ENCODE measurements at regions of chr6 and their contacts with region 1.

Region 1: DNA sequence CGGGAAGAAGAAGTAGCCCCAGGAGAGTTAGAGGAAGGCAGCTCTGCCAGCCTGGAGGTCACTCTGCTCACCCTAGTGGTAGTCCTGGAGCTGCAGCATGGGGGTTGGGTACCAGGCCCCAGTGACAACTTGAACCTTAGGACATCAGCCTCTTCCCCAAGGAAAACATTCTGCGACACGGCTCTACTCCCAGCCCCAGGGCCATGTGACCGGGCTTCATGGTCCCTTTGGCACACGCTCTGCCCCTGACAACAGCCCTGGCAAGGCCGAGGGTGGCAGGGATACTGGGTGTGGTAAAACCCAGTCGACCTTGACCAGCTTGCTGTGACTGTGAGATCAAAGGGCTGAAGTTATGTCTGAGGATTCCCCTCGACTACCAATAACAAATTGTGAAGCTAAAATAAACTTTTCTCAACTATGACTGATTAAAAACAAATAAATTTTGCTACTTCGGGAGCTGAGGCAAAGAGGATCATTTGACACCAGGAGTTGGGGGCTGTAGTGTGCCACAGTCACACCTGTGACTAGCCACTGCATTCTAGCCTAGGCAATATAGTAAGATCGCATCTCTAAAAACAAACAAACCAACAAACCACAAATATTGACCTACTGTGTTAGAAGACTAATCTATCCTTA is 24.4 kb upstream of the ARID1B start:
- DNase-seq: peak; percentile 20
- ATAC-seq: peak; percentile 94
- H3K4me3 ChIP-seq: no peak overlapping the region
- H3K27ac ChIP-seq: peak overlapping the region; percentile 48
- H3K4me1 ChIP-seq: peaks cover 26% of the 10 kb centered on the region
- H3K27me3 ChIP-seq: no peaks in the 10 kb centered on the region
- CTCF ChIP-seq: peak; percentile 69

Region 2: DNA sequence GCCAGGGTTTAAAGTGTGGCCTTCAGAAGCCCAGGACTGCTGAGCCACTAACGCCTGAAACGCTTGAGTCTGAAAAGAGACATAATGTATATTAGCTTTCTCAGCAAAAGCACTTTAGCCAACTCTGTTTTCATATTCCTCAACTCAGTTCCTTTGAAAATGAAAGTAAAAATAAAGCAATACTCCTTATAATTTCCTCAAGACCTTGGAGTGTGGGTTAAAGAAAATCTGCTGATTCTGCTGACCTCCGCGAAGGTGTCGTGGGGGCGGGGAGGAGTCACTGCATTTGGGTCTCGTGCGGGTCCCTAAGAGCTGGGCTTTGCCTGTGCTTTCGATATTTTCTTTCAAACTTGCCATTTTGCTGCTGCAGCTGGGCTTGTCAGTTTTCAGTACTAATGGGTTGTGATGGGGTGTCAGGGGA is 117.8 kb before region 1 on chr6:
- CTCF ChIA-PET with region 1: no interaction called
- POLR2A ChIA-PET with region 1: no interaction called
- in situ Hi-C with region 1: no loop called
- intact Hi-C with region 1: no loop called
- DNase-seq: no peak
- ATAC-seq: no peak
- H3K4me3 ChIP-seq: 0 out of 4 replicates have a peak overlapping the region, but pooled peaks of 1 of the 2 experiments have one; percentile 23
- H3K27ac ChIP-seq: peak overlapping the region; percentile 51; the same call in 1 of the 2 replicates
- H3K4me1 ChIP-seq: peaks cover 7% of the 10 kb centered on the region
- H3K27me3 ChIP-seq: no peaks in the 10 kb centered on the region
- CTCF ChIP-seq: no peak

Region 3: GRCh38 chr6:156729248-156729647 is 23.5 kb before region 1 on chr6:
- CTCF ChIA-PET with region 1: no interaction called
- POLR2A ChIA-PET with region 1: interaction called, 10 read pairs
- in situ Hi-C with region 1: no loop called
- intact Hi-C with region 1: no loop called
- DNase-seq: no peak
- ATAC-seq: no peak
- H3K4me3 ChIP-seq: no peak overlapping the region
- H3K27ac ChIP-seq: no peak overlapping the region
- H3K4me1 ChIP-seq: no peaks in the 10 kb centered on the region
- H3K27me3 ChIP-seq: no peaks in the 10 kb centered on the region
- CTCF ChIP-seq: no peak

Region 4: DNA sequence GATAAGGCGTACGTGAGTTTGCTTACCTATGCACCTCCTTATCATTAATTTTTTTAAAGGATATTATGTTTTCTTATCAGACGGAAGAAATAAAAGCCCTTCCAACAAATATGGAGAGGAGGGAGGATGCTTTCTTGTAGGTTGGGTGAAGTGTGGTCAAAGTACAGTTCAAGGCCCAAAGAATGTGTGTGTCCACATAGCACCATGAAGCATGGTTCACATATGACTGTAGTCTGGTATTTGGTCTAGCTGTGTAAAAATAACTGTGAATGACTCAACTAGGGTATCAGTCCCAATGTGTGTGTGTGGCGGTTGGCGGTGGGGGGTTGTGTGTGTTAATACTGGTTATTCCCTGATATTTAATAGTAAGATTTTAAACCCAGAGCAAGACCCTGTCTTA is 357.8 kb after region 1 on chr6:
- CTCF ChIA-PET with region 1: no interaction called
- POLR2A ChIA-PET with region 1: no interaction called
- in situ Hi-C with region 1: no loop called
- intact Hi-C with region 1: no loop called
- DNase-seq: no peak
- ATAC-seq: no peak
- H3K4me3 ChIP-seq: no peak overlapping the region
- H3K27ac ChIP-seq: no peak overlapping the region
- H3K4me1 ChIP-seq: peaks cover 12% of the 10 kb centered on the region
- H3K27me3 ChIP-seq: no peaks in the 10 kb centered on the region
- CTCF ChIP-seq: no peak

Region 5: GRCh38 chr6:157358287-157358686 is 605.5 kb after region 1 on chr6:
- CTCF ChIA-PET with region 1: no interaction called
- POLR2A ChIA-PET with region 1: no interaction called
- in situ Hi-C with region 1: no loop called
- intact Hi-C with region 1: no loop called
- DNase-seq: no peak
- ATAC-seq: no peak
- H3K4me3 ChIP-seq: no peak overlapping the region
- H3K27ac ChIP-seq: no peak overlapping the region
- H3K4me1 ChIP-seq: no peaks in the 10 kb centered on the region
- H3K27me3 ChIP-seq: peaks cover 5% of the 10 kb centered on the region; the same call in 1 of the 2 replicates
- CTCF ChIP-seq: no peak